Cardiac septum (tissue), 1 donor: ENCODE measurements at regions of chr1 and their contacts with region 1.

Region 1: GRCh38 chr1:156860113-156860627 is 495 bp upstream of the NTRK1 start:
- DNase-seq: no peak

Region 2: DNA sequence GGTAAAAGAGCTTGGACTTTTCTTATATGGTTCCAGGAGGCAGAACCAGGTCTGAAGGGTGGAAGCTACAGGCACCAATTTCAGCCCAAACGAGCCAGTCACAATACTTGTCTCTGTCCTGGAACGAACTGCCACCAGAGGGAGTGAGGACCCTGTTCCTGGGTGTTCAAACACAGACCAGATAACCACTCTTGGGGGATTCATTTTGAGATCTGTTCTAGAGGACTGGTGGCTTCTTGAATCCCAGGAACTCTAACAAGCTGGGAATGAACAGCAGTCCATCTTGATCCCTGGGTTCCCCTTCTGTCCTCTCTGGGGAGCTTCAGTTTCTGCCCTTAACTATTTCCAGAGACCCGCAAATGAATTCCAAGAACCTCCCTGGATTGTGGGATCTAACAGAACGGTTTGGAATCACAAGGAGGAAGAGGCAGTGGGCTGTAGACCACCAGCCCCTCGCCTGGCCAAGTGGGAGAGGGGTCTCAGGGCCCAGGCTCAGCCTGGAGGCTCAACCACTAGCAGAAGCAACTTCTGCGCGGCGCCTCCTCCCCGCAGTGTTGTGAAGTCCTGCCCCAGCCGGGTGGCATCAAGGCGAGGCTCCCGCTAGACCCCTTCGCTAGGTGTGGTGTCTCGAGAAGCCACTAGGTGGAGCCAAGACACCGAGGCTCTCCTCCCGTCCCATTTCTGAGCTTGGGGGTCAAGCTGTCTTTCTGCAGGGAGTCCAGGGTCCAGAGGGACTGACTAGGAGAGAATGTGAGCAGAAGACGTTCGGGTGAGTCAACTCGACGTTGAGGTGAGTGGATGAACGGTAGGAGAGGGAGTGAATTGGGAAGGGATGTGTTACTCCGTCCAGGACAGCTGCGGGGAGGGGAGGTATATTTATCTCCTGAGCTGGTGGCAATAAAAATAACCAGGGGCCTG is 170.9 kb before region 1 on chr1:
- intact Hi-C with region 1: loop called (anchors 10 kb)
- DNase-seq: peak; percentile 82

Region 3: GRCh38 chr1:156728597-156729462 is 131.3 kb before region 1 on chr1 and contains the start of gene ISG20L2:
- intact Hi-C with region 1: loop called (anchors 5 kb)
- DNase-seq: peak; percentile 98
- total RNA-seq, gene ISG20L2: 12.4 TPM

Region 4: GRCh38 chr1:156797212-156797871 is 62.8 kb before region 1 on chr1:
- intact Hi-C with region 1: loop called (anchors 2 kb)
- DNase-seq: no peak

Region 5: DNA sequence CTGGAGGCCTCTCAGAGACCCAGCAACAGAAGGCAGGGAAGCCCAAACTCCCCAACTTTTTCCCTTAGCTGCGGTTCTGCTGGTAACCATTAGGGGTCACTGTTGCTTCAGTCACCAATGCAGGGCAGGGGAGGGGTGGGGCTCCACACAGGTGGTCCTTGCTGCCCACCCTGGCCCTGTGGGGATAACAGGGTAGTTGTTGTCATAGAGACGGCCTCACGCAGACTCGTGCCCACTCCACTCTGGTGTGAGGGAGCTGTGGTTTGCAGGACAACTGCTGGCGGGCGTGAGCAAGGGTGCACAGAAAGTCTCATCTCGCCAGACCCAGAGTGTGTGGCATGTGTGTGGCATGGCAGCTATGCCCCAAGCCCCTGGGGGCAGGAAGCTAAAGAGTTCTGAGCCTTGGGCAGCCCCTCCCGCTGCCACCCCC is 21.2 kb before region 1 on chr1:
- intact Hi-C with region 1: loop called (anchors 1 kb)
- DNase-seq: no peak

Region 6: GRCh38 chr1:157163273-157164127 is 303.3 kb after region 1 on chr1:
- intact Hi-C with region 1: no loop called
- DNase-seq: peak; percentile 82